Motor neuron (in vitro differentiated cells): ENCODE measurements at regions of chr2 and their contacts with region 1.

Region 1: GRCh38 chr2:53202063-53202462 is 565.5 kb upstream of the CHAC2 start:
- ATAC-seq: peak; percentile 40 to 95 (median 71)
- H3K4me3 ChIP-seq: no peak overlapping the region
- H3K27ac ChIP-seq: no peak overlapping the region
- H3K4me1 ChIP-seq: peaks cover 0 to 3% of the 10 kb centered on the region in 2 donors

Region 2: DNA sequence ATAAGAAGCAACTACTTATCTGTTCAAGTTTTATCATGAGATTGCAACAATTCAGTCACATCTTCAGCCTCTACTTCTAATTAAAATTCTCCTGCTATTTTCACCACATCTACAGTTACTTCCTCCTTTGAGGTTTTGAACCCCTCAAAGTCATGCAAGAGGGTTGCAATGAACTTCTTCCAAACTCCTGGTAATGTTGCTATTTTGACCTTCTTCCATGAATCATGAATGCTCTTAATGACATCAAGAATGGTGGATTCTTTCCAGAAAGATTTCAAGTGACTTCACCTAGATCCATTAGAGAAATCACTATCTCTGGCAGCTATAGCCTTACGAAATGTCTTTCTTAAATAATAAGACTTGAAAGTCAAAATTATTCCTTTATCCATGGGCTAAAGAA is 1117.3 kb before region 1 on chr2:
- in situ Hi-C with region 1: no loop called
- ATAC-seq: no peak
- H3K4me3 ChIP-seq: no peak overlapping the region
- H3K27ac ChIP-seq: no peak overlapping the region
- H3K4me1 ChIP-seq: no peaks in the 10 kb centered on the region

Region 3: DNA sequence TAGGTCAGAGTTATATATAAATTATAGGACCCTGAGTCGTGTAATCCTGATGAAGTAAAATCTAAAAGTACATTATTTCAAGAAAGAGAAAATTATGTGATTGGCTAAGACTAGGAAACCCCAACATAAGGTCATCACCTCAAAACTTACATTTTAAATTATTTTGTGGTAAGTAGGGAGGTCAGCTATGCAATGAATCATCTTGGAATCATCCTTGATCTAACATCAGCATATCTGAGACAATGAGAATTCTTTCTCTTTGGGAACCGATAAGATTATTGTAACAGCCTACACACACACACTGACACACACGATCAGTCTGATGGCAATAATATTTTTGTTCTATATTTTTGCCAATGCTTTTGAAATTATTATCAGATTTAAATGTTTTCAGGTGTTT is 339.3 kb before region 1 on chr2:
- in situ Hi-C with region 1: loop called in 1 of 9 experiments (anchors 25 kb)
- ATAC-seq: peak in 2 of 8 experiments; percentile 66 to 76
- H3K4me3 ChIP-seq: no peak overlapping the region
- H3K27ac ChIP-seq: no peak overlapping the region
- H3K4me1 ChIP-seq: peaks cover 7 to 12% of the 10 kb centered on the region in 2 donors